GM12878 (cell line): ENCODE measurements at regions of chr2 and their contacts with region 1.

Region 1: GRCh38 chr2:184611361-184612085 is 13.2 kb downstream of the ZNF804A start:
- DNase-seq: no peak
- ATAC-seq: peak; percentile 34; the same call in 1 of the 3 replicates
- H3K4me3 ChIP-seq: no peak overlapping the region
- H3K27ac ChIP-seq: no peak overlapping the region
- H3K4me1 ChIP-seq: no peaks in the 10 kb centered on the region
- H3K27me3 ChIP-seq: no peaks in the 10 kb centered on the region
- CTCF ChIP-seq: peak in 2 of 3 experiments; percentile 31 to 32; a peak in 4 of 6 replicates
- EP300 ChIP-seq: no peak
- POLR2A ChIP-seq: no peak
- RAD21 ChIP-seq: peak; percentile 19; the same call in 1 of the 2 replicates

Region 2: GRCh38 chr2:184596819-184597411 is 14.6 kb before region 1 on chr2:
- CTCF ChIA-PET with region 1: interaction called, 11 read pairs
- POLR2A ChIA-PET with region 1: no interaction called
- RAD21 ChIA-PET with region 1: interaction called, 3 read pairs
- SMC1A ChIA-PET with region 1: interaction called, 7 read pairs
- in situ Hi-C with region 1: no loop called
- intact Hi-C with region 1: no loop called
- DNase-seq: no peak
- ATAC-seq: peak; percentile 68
- H3K4me3 ChIP-seq: peak overlapping the region; percentile 37
- H3K27ac ChIP-seq: no peak overlapping the region
- H3K4me1 ChIP-seq: peaks cover 5% of the 10 kb centered on the region
- H3K27me3 ChIP-seq: peaks cover 5 to 9% of the 10 kb centered on the region in 2 experiments; a peak in 3 of 4 replicates
- CTCF ChIP-seq: no peak
- EP300 ChIP-seq: no peak
- POLR2A ChIP-seq: no peak
- RAD21 ChIP-seq: 0 out of 2 replicates have a peak, but pooled peaks have one; percentile 12

Region 3: GRCh38 chr2:184743096-184743495 is 131.6 kb after region 1 on chr2:
- CTCF ChIA-PET with region 1: no interaction called
- POLR2A ChIA-PET with region 1: no interaction called
- RAD21 ChIA-PET with region 1: no interaction called
- SMC1A ChIA-PET with region 1: no interaction called
- in situ Hi-C with region 1: no loop called
- intact Hi-C with region 1: no loop called
- DNase-seq: no peak
- ATAC-seq: no peak
- H3K4me3 ChIP-seq: no peak overlapping the region
- H3K27ac ChIP-seq: no peak overlapping the region
- H3K4me1 ChIP-seq: no peaks in the 10 kb centered on the region
- H3K27me3 ChIP-seq: no peaks in the 10 kb centered on the region
- CTCF ChIP-seq: no peak
- EP300 ChIP-seq: no peak
- POLR2A ChIP-seq: no peak
- RAD21 ChIP-seq: no peak